CD4-positive, alpha-beta memory T cell (primary cell): ENCODE measurements at regions of chr1 and their contacts with region 1.

Region 1: GRCh38 chr1:91885716-91886506 is at the start of gene TGFBR3:
- DNase-seq: peak; percentile 78 to 81 (median 80)
- H3K4me3 ChIP-seq: peak within 1 kb of the TSS; percentile 67 to 87
- H3K4me3 Mint-ChIP-seq: peak within 1 kb of the TSS; percentile 94 to 99 (median 97)
- H3K27ac ChIP-seq: peak within 1 kb of the TSS; percentile 65
- H3K27ac Mint-ChIP-seq: peak within 1 kb of the TSS; percentile 84 to 97 (median 94)
- H3K4me1 ChIP-seq: peaks cover 37% of the 10 kb centered on the region
- H3K4me1 Mint-ChIP-seq: peaks cover 30 to 52% (median 39%) of the 10 kb centered on the region in 4 donors
- H3K27me3 ChIP-seq: no peaks in the 10 kb centered on the region
- H3K27me3 Mint-ChIP-seq: no peaks in the 10 kb centered on the region
- total RNA-seq, gene TGFBR3: 44.4 to 47.3 TPM

Region 2: DNA sequence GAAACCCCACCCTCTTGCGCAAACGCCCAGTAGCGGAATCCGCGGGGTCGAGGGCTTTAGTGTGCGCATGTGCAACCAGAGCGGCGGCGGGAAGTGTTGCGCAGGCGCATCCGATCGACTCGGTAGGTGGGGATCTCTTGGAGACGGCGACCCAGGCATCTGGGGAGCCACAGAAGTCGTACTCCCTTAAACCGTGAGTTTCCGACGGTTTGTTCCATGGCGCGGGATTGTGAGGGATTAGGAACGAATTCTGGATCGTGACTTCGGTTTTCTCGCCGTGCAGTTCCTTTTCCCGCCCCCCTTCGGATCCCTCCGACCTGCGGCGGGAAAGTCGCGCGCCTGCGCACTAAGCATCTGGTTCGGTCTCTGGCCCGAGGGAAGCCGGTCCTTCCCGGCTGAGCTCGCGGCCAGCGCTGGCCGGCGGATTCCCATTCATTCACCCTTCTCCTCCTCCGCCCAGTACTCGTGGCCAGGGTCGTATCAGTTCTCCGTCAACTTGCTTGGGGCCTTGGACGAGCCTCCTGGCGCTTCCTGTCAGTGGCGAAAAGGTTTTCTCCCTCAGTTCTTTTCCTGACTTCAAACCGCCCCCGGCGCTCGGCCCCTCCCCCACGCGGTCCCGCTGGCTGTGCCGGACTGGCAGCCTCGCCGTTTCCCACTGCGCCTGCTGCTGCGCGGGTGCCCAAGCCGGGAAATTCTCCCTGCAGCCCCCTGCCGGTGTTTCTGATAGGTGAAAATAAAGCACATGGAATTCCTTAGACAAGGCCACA is 385.0 kb before region 1 on chr1 and contains the start of gene CDC7:
- CTCF ChIA-PET with region 1: interaction called, 10 read pairs
- POLR2A ChIA-PET with region 1: interaction called, 5 read pairs
- intact Hi-C with region 1: no loop called
- DNase-seq: peak; percentile 69 to 87 (median 81)
- H3K4me3 ChIP-seq: peak within 1 kb of the TSS; percentile 62 to 81
- H3K4me3 Mint-ChIP-seq: no peak within 1 kb of the TSS
- H3K27ac ChIP-seq: peak within 1 kb of the TSS; percentile 75
- H3K27ac Mint-ChIP-seq: no peak within 1 kb of the TSS
- H3K4me1 ChIP-seq: peaks cover 31% of the 10 kb centered on the region
- H3K4me1 Mint-ChIP-seq: peaks cover 18 to 25% (median 21%) of the 10 kb centered on the region in 4 donors
- H3K27me3 ChIP-seq: no peaks in the 10 kb centered on the region
- H3K27me3 Mint-ChIP-seq: no peaks in the 10 kb centered on the region
- total RNA-seq, gene CDC7: 4.7 to 6.0 TPM

Region 3: DNA sequence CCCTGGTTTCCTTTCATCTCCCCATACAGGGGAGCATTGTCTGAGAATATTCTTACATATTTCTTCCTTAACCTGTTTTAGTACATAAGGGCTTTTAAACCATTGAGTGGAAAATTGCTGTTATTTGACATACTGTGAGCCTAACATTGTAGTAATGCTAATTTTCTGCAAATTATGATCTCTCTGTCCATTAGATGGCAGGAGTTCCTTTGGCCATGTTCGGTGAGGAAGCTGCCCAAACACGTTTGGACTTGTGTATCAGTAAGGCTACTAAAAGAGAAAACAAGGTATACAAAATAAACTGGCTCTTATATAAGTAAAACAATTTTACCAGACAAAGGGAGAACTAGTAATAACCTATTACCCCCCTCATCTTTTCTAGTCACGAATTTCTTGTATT is 356.1 kb before region 1 on chr1:
- CTCF ChIA-PET with region 1: interaction called, 9 read pairs
- POLR2A ChIA-PET with region 1: interaction called, 6 read pairs
- intact Hi-C with region 1: loop called (anchors 1 kb)
- DNase-seq: peak in 1 of 5 donors; percentile 14
- H3K4me3 ChIP-seq: no peak overlapping the region
- H3K4me3 Mint-ChIP-seq: peak overlapping the region in 1 of 8 donors; percentile 6
- H3K27ac ChIP-seq: no peak overlapping the region
- H3K27ac Mint-ChIP-seq: peak overlapping the region in 4 of 7 donors; percentile 8 to 92 (median 64)
- H3K4me1 ChIP-seq: peaks cover 24% of the 10 kb centered on the region
- H3K4me1 Mint-ChIP-seq: peaks cover 22 to 34% (median 25%) of the 10 kb centered on the region in 4 donors
- H3K27me3 ChIP-seq: no peaks in the 10 kb centered on the region
- H3K27me3 Mint-ChIP-seq: no peaks in the 10 kb centered on the region

Region 4: DNA sequence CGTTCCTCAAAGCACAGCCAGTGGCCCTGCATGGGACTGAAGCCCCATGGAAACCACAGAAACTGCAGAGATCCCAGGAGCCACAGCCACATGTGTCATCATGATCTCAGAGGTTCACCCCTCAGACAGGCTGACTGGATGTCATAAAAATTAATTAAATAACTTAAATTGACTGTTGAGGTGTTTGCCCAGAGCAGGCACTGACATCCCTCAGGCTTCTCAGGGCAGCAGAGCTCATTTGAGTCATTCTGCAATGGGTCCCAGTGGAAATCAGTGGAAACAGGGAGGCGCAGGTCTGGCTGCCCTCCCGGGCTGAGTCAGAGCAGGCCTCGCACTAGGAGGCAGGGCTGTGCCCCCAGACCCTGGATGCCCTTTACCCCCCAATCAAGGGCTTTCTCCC is 250.1 kb before region 1 on chr1:
- CTCF ChIA-PET with region 1: no interaction called
- POLR2A ChIA-PET with region 1: no interaction called
- intact Hi-C with region 1: no loop called
- DNase-seq: no peak
- H3K4me3 ChIP-seq: no peak overlapping the region
- H3K4me3 Mint-ChIP-seq: no peak overlapping the region
- H3K27ac ChIP-seq: no peak overlapping the region
- H3K27ac Mint-ChIP-seq: peak overlapping the region in 1 of 7 donors; percentile 53
- H3K4me1 ChIP-seq: peaks cover 4% of the 10 kb centered on the region
- H3K4me1 Mint-ChIP-seq: peaks cover 0 to 8% (median 7%) of the 10 kb centered on the region in 4 donors
- H3K27me3 ChIP-seq: no peaks in the 10 kb centered on the region
- H3K27me3 Mint-ChIP-seq: no peaks in the 10 kb centered on the region

Region 5: DNA sequence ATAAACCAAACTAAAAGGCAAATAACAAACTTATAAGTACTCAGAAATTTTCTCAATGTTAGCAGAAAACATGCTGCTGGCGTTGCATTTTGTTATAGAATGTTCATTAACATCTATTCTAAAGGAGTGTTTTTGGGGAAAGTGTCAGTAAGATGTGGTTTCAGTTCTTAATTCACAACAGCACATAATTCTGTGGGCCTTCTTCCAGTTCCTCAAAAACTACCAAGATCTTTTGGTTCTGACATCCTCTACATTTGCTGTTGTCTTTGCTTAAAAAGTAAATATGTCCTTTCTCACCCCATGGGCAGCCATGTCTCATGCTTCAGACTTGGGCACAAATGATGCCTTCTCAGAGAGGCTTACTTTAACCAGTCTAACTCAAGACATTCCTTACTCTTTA is 232.7 kb before region 1 on chr1:
- CTCF ChIA-PET with region 1: no interaction called
- POLR2A ChIA-PET with region 1: no interaction called
- intact Hi-C with region 1: no loop called
- DNase-seq: no peak
- H3K4me3 ChIP-seq: no peak overlapping the region
- H3K4me3 Mint-ChIP-seq: no peak overlapping the region
- H3K27ac ChIP-seq: no peak overlapping the region
- H3K27ac Mint-ChIP-seq: peak overlapping the region in 2 of 7 donors; percentile 5 to 26
- H3K4me1 ChIP-seq: peaks cover 4% of the 10 kb centered on the region
- H3K4me1 Mint-ChIP-seq: peaks cover 4 to 8% (median 7%) of the 10 kb centered on the region in 4 donors
- H3K27me3 ChIP-seq: no peaks in the 10 kb centered on the region
- H3K27me3 Mint-ChIP-seq: no peaks in the 10 kb centered on the region

Region 6: GRCh38 chr1:91697416-91697815 is 188.5 kb before region 1 on chr1:
- CTCF ChIA-PET with region 1: no interaction called
- POLR2A ChIA-PET with region 1: interaction called, 3 read pairs
- intact Hi-C with region 1: loop called (anchors 5 kb)
- DNase-seq: peak; percentile 56 to 75 (median 58)
- H3K4me3 ChIP-seq: no peak overlapping the region
- H3K4me3 Mint-ChIP-seq: peak overlapping the region in 7 of 8 donors; percentile 11 to 77 (median 39)
- H3K27ac ChIP-seq: no peak overlapping the region
- H3K27ac Mint-ChIP-seq: peak overlapping the region; percentile 74 to 91 (median 79)
- H3K4me1 ChIP-seq: peaks cover 23% of the 10 kb centered on the region
- H3K4me1 Mint-ChIP-seq: peaks cover 25 to 47% (median 39%) of the 10 kb centered on the region in 4 donors
- H3K27me3 ChIP-seq: no peaks in the 10 kb centered on the region
- H3K27me3 Mint-ChIP-seq: no peaks in the 10 kb centered on the region

Region 7: DNA sequence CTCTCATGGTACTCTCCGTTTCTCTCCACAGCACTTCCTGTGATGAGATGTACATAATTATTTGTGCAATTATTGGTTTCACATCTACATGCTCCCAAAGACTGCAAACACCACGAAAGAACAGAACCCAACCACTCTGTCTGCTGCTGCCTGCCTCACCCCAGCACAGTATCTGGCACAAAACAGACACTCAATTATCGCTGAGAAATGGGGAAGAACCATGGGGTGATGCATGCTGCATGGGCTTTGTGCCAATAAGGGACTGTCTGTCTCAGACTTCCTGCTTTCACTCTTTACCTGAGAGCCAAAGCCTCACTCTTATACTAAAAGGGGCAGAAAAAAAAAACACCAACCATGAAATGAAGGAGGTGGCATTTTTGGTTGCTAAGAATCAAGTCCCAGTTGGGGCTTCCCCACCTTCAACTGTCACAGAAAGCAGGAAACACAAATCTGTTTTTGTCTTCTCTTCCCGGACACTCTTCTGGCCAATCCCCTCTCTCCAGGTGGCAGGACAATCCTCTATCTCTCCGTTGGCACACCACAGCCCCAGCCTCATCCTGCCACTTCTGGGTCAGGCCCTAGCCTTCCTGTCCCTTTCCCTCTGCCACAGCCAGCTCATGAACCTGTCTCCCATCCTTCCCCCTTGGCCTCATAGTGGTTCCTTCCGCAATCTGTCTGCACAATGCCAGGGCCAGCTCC is 81.9 kb before region 1 on chr1:
- CTCF ChIA-PET with region 1: interaction called, 24 read pairs
- POLR2A ChIA-PET with region 1: interaction called, 49 read pairs
- intact Hi-C with region 1: loop called (anchors 1 kb)
- DNase-seq: peak; percentile 87 to 92 (median 89)
- H3K4me3 ChIP-seq: peak overlapping the region; percentile 27 to 61
- H3K4me3 Mint-ChIP-seq: peak overlapping the region; percentile 73 to 90 (median 80)
- H3K27ac ChIP-seq: peak overlapping the region; percentile 98
- H3K27ac Mint-ChIP-seq: peak overlapping the region; percentile 97 to 100 (median 100)
- H3K4me1 ChIP-seq: peaks cover 49% of the 10 kb centered on the region
- H3K4me1 Mint-ChIP-seq: peaks cover 44 to 66% (median 51%) of the 10 kb centered on the region in 4 donors
- H3K27me3 ChIP-seq: no peaks in the 10 kb centered on the region
- H3K27me3 Mint-ChIP-seq: no peaks in the 10 kb centered on the region

Region 8: GRCh38 chr1:91900538-91900937 is 14.6 kb after region 1 on chr1:
- CTCF ChIA-PET with region 1: interaction called, 11 read pairs
- POLR2A ChIA-PET with region 1: interaction called, 5 read pairs
- intact Hi-C with region 1: no loop called
- DNase-seq: no peak
- H3K4me3 ChIP-seq: no peak overlapping the region
- H3K4me3 Mint-ChIP-seq: no peak overlapping the region
- H3K27ac ChIP-seq: no peak overlapping the region
- H3K27ac Mint-ChIP-seq: no peak overlapping the region
- H3K4me1 ChIP-seq: no peaks in the 10 kb centered on the region
- H3K4me1 Mint-ChIP-seq: peaks cover 8 to 11% (median 10%) of the 10 kb centered on the region in 4 donors
- H3K27me3 ChIP-seq: no peaks in the 10 kb centered on the region
- H3K27me3 Mint-ChIP-seq: peaks cover 0 to 2% of the 10 kb centered on the region in 2 donors

Region 9: GRCh38 chr1:91997607-91998195 is 111.8 kb after region 1 on chr1:
- CTCF ChIA-PET with region 1: no interaction called
- POLR2A ChIA-PET with region 1: no interaction called
- intact Hi-C with region 1: no loop called
- DNase-seq: peak; percentile 40 to 53 (median 46)
- H3K4me3 ChIP-seq: no peak overlapping the region
- H3K4me3 Mint-ChIP-seq: no peak overlapping the region
- H3K27ac ChIP-seq: no peak overlapping the region
- H3K27ac Mint-ChIP-seq: no peak overlapping the region
- H3K4me1 ChIP-seq: no peaks in the 10 kb centered on the region
- H3K4me1 Mint-ChIP-seq: no peaks in the 10 kb centered on the region
- H3K27me3 ChIP-seq: no peaks in the 10 kb centered on the region
- H3K27me3 Mint-ChIP-seq: no peaks in the 10 kb centered on the region